T-cell (primary cell): ENCODE measurements at regions of chr1 and their contacts with region 1.

Region 1: GRCh38 chr1:207227131-207227630 is 94.3 kb upstream of the CD55 start:
- DNase-seq: no peak
- ATAC-seq: no peak
- H3K4me3 ChIP-seq: no peak overlapping the region
- H3K4me3 Mint-ChIP-seq: no peak overlapping the region
- H3K27ac ChIP-seq: no peak overlapping the region
- H3K27ac Mint-ChIP-seq: no peak overlapping the region
- H3K4me1 ChIP-seq: no peaks in the 10 kb centered on the region
- H3K4me1 Mint-ChIP-seq: no peaks in the 10 kb centered on the region
- H3K27me3 ChIP-seq: no peaks in the 10 kb centered on the region
- H3K27me3 Mint-ChIP-seq: no peaks in the 10 kb centered on the region

Region 2: DNA sequence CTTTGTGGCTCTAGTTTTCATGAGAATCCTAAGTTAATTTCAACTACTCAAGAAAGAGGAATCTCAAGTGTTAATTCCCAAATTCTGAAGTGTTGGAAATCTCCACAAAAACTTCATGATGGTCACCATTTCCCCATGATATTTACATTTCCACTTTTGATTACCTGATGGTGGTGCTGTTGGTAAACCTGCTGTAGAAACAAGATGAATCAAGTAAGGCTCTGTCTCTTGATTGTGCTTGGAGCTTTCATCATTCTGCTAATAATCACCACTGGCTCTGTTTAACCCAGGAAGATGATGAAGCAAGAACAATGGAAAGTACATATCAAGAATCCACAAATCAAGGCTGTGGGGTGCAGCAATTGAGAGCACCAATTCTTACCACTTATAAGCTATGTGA is 45.3 kb before region 1 on chr1:
- CTCF ChIA-PET with region 1: no interaction called
- POLR2A ChIA-PET with region 1: no interaction called
- DNase-seq: peak in 1 of 35 experiments; percentile 42
- ATAC-seq: peak in 2 of 4 experiments; percentile 30 to 46
- H3K4me3 ChIP-seq: no peak overlapping the region
- H3K4me3 Mint-ChIP-seq: no peak overlapping the region
- H3K27ac ChIP-seq: no peak overlapping the region
- H3K27ac Mint-ChIP-seq: no peak overlapping the region
- H3K4me1 ChIP-seq: no peaks in the 10 kb centered on the region
- H3K4me1 Mint-ChIP-seq: peaks cover 0 to 2% (median 0%) of the 10 kb centered on the region in 3 donors
- H3K27me3 ChIP-seq: no peaks in the 10 kb centered on the region
- H3K27me3 Mint-ChIP-seq: no peaks in the 10 kb centered on the region

Region 3: GRCh38 chr1:207393610-207394009 is 166.4 kb after region 1 on chr1:
- CTCF ChIA-PET with region 1: no interaction called
- POLR2A ChIA-PET with region 1: interaction called in 1 of 2 experiments, 10 read pairs
- DNase-seq: no peak
- ATAC-seq: no peak
- H3K4me3 ChIP-seq: no peak overlapping the region
- H3K4me3 Mint-ChIP-seq: no peak overlapping the region
- H3K27ac ChIP-seq: no peak overlapping the region
- H3K27ac Mint-ChIP-seq: no peak overlapping the region
- H3K4me1 ChIP-seq: no peaks in the 10 kb centered on the region
- H3K4me1 Mint-ChIP-seq: no peaks in the 10 kb centered on the region
- H3K27me3 ChIP-seq: no peaks in the 10 kb centered on the region
- H3K27me3 Mint-ChIP-seq: peaks cover 4 to 6% of the 10 kb centered on the region in 2 donors